ENCODE measurements at regions of chr2 and their contacts with region 1.

Region 1: DNA sequence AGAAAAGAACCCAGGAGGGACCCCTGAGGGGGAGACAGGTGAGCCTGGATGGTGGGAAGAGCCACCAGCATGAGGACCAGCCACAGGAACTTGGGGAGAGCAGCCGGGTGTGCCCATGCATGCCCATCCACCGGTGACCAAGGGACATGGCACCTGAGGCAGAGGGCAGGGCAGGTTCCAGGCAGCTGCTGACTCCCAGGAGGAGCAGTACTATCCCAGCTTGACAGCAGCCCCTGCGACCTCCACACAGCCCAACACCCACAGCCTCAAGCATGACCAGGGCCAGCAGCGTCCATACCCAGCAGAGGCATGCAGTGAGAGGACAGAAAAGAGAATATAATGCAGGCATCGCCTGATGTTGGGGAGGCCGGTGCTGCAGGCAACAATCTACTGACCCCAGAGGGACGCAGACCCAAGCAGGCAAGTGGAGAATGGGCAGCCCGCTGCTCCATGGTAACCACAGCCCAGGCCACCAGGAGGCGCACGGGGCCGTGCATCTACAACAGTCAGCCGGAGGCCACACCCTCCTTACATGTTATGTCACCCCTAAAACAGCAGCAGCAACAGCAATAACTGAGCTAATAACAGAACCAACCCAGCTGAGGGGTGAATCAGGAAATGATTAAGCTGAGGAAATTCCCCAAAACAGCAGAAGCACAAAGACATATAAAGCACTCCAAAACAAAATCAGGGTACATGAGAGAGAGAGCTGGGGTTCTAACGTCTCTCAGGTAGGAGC is 44.1 kb downstream of the ANKMY1 start:
- DNase-seq: peak; percentile 80 to 91
- ATAC-seq: peak; percentile 95 to 99 (median 99)
- H3K4me3 ChIP-seq: no peak overlapping the region
- H3K4me3 Mint-ChIP-seq: no peak overlapping the region
- H3K27ac ChIP-seq: peak overlapping the region; percentile 9
- H3K27ac Mint-ChIP-seq: peak overlapping the region; percentile 7 to 78
- H3K4me1 ChIP-seq: peaks cover 10% of the 10 kb centered on the region
- H3K4me1 Mint-ChIP-seq: peaks cover 6 to 20% of the 10 kb centered on the region in 2 donors
- H3K27me3 ChIP-seq: no peaks in the 10 kb centered on the region
- H3K27me3 Mint-ChIP-seq: no peaks in the 10 kb centered on the region
- CTCF ChIP-seq: peak; percentile 86

Region 2: DNA sequence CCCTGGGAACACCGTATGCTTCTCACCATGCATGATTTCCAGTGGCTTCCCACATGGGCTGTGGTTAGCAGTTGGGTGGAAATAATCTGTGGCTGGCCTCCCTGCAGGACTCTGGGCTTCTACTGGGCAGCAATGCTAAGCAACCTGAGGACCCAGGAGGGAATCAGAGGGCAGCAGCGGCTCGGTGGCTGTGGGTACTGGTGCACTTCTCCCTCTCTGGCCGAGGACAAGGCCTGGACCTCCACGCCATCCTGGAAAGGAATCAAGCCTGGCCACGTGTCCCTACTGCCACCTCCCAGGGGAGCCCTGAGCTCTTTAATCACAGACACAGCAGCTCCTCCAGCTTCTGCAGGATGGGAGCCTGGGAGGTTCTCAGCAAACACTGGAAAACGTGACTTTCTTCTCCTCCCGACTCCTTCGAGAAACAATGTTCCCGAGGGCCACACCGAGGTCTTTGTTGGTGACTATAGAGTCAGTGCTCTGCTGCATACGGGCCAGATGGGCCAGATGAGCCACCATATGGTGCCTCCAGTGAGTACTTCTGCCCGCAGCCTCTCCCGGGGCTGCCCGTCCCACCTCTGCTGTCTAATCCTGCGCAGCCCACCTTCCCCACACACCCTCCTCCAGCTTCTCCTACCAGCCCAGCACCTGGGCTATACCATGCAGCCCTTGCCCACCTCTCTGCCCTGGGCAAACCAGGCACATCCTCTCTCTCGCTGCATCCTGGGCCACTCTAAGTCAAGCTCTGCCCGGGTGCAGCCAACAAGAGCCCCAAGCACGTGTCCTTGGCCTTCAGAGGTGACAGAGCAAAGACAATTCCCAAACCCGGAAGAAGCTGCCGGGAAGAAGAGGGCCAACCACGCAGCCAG is 330.5 kb before region 1 on chr2:
- intact Hi-C with region 1: no loop called
- DNase-seq: no peak
- ATAC-seq: no peak
- H3K4me3 ChIP-seq: no peak overlapping the region
- H3K4me3 Mint-ChIP-seq: no peak overlapping the region
- H3K27ac ChIP-seq: no peak overlapping the region
- H3K27ac Mint-ChIP-seq: no peak overlapping the region
- H3K4me1 ChIP-seq: no peaks in the 10 kb centered on the region
- H3K4me1 Mint-ChIP-seq: no peaks in the 10 kb centered on the region
- H3K27me3 ChIP-seq: no peaks in the 10 kb centered on the region
- H3K27me3 Mint-ChIP-seq: peaks cover 14 to 35% of the 10 kb centered on the region in 2 donors
- CTCF ChIP-seq: no peak

Region 3: GRCh38 chr2:240469239-240469636 is 44.5 kb before region 1 on chr2:
- intact Hi-C with region 1: no loop called
- DNase-seq: peak in 1 of 2 donors; percentile 11
- ATAC-seq: no peak
- H3K4me3 ChIP-seq: no peak overlapping the region
- H3K4me3 Mint-ChIP-seq: no peak overlapping the region
- H3K27ac ChIP-seq: no peak overlapping the region
- H3K27ac Mint-ChIP-seq: no peak overlapping the region
- H3K4me1 ChIP-seq: no peaks in the 10 kb centered on the region
- H3K4me1 Mint-ChIP-seq: peaks cover 0 to 4% of the 10 kb centered on the region in 2 donors
- H3K27me3 ChIP-seq: no peaks in the 10 kb centered on the region
- H3K27me3 Mint-ChIP-seq: no peaks in the 10 kb centered on the region
- CTCF ChIP-seq: no peak

Region 4: DNA sequence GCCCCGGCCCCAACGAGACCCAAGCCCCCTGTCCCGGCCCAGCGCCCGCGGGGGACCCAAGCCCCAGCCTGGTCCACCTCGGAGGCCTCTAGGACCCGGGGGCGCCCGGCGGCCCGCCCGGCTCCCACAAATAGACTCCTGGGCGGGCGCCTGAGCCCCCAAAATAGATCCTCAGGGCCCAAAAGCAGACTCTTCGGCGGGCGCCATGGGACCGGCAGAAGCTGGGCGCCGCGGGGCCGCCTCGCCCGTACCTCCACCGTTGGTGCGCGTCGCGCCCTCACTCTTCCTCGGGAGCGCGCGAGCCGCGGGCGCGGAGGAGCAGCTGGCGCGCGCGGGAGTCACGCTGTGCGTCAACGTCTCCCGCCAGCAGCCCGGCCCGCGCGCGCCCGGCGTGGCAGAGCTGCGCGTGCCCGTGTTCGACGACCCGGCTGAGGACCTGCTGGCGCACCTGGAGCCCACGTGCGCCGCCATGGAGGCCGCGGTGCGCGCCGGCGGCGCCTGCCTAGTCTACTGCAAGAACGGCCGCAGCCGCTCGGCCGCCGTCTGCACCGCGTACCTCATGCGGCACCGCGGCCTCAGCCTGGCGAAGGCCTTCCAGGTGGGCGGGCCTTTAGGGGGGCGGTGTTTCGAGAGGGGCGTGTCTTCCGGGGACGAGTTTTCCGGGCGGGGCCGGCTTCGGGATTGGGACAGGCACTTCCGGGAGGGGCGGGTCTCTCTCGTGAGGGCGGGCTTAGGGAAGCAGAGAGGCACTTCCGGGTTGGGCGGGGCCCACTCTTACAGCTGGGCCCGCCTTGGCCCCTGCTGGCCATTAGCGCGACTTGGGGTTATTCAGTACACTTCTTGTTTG is 47.0 kb after region 1 on chr2:
- intact Hi-C with region 1: loop called (anchors 10 kb)
- DNase-seq: peak; percentile 98 to 99
- ATAC-seq: peak; percentile 64 to 85 (median 67)
- H3K4me3 ChIP-seq: peak overlapping the region; percentile 62
- H3K4me3 Mint-ChIP-seq: peak overlapping the region; percentile 93
- H3K27ac ChIP-seq: peak overlapping the region; percentile 96
- H3K27ac Mint-ChIP-seq: peak overlapping the region; percentile 99
- H3K4me1 ChIP-seq: peaks cover 78% of the 10 kb centered on the region
- H3K4me1 Mint-ChIP-seq: peaks cover 60 to 76% of the 10 kb centered on the region in 2 donors
- H3K27me3 ChIP-seq: no peaks in the 10 kb centered on the region
- H3K27me3 Mint-ChIP-seq: no peaks in the 10 kb centered on the region
- CTCF ChIP-seq: peak; percentile 39

Region 5: DNA sequence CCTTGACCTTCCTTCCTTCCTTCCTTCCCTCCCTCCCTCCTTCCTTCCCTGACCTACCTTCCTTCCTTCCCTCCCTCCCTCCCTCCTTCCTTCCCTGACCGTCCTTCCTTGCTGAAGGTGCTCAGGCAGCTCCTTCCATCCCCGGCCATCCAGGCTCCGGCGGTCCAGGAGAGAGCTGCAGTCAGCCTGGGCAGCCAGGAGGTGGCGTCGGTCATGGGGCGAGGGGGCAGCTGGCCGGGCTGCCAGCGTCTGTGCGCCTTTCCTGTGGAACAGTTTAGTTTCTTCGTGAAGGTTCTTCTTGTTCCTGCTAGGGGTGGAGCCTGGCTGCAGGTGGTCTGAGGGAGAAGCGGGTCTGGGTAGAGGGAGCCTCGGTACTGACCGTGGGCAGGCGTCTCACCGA is 127.2 kb after region 1 on chr2:
- intact Hi-C with region 1: no loop called
- DNase-seq: peak in 1 of 2 donors; percentile 23
- ATAC-seq: peak in 2 of 3 donors; percentile 68 to 72
- H3K4me3 ChIP-seq: no peak overlapping the region
- H3K4me3 Mint-ChIP-seq: no peak overlapping the region
- H3K27ac ChIP-seq: no peak overlapping the region
- H3K27ac Mint-ChIP-seq: peak overlapping the region in 1 of 2 donors; percentile 20
- H3K4me1 ChIP-seq: peaks cover 2% of the 10 kb centered on the region
- H3K4me1 Mint-ChIP-seq: peaks cover 0 to 11% of the 10 kb centered on the region in 2 donors
- H3K27me3 ChIP-seq: no peaks in the 10 kb centered on the region
- H3K27me3 Mint-ChIP-seq: peaks cover 0 to 3% of the 10 kb centered on the region in 2 donors
- CTCF ChIP-seq: no peak

Region 6: DNA sequence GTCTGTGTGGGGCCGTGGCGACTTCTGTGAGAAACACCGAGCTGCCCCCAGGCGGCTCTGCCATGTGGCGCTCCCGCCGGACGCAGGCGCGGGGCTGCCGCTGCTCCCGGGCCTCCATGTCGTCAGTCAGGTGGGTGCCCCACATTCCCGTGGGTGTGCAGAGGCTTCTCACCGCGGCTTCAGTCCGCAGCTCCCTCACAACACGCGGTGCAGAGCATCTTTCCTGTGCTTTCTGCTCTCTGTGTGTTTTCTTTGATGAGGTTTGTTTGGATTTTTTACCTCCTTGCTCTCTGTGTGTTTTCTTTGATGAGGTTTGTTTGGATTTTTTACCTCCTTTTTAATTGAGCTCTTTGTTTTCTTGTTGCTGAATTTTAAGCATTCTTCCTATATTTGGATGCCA is 190.9 kb after region 1 on chr2:
- intact Hi-C with region 1: loop called (anchors 10 kb)
- DNase-seq: peak in 1 of 2 donors; percentile 64
- ATAC-seq: no peak
- H3K4me3 ChIP-seq: no peak overlapping the region
- H3K4me3 Mint-ChIP-seq: no peak overlapping the region
- H3K27ac ChIP-seq: no peak overlapping the region
- H3K27ac Mint-ChIP-seq: no peak overlapping the region
- H3K4me1 ChIP-seq: no peaks in the 10 kb centered on the region
- H3K4me1 Mint-ChIP-seq: peaks cover 8 to 11% of the 10 kb centered on the region in 2 donors
- H3K27me3 ChIP-seq: peaks cover 2% of the 10 kb centered on the region
- H3K27me3 Mint-ChIP-seq: peaks cover 11% of the 10 kb centered on the region in 2 donors
- CTCF ChIP-seq: no peak

Region 7: GRCh38 chr2:240733803-240734495 is 220.2 kb after region 1 on chr2:
- intact Hi-C with region 1: loop called (anchors 1 kb)
- DNase-seq: peak in 1 of 2 donors; percentile 45
- ATAC-seq: peak; percentile 42 to 60 (median 42)
- H3K4me3 ChIP-seq: no peak overlapping the region
- H3K4me3 Mint-ChIP-seq: no peak overlapping the region
- H3K27ac ChIP-seq: no peak overlapping the region
- H3K27ac Mint-ChIP-seq: no peak overlapping the region
- H3K4me1 ChIP-seq: no peaks in the 10 kb centered on the region
- H3K4me1 Mint-ChIP-seq: no peaks in the 10 kb centered on the region
- H3K27me3 ChIP-seq: no peaks in the 10 kb centered on the region
- H3K27me3 Mint-ChIP-seq: no peaks in the 10 kb centered on the region
- CTCF ChIP-seq: no peak

Region 8: GRCh38 chr2:240840435-240841080 is 326.8 kb after region 1 on chr2:
- intact Hi-C with region 1: loop called (anchors 2 kb)
- DNase-seq: peak in 1 of 2 donors; percentile 50
- ATAC-seq: peak in 1 of 3 donors; percentile 6
- H3K4me3 ChIP-seq: no peak overlapping the region
- H3K4me3 Mint-ChIP-seq: no peak overlapping the region
- H3K27ac ChIP-seq: no peak overlapping the region
- H3K27ac Mint-ChIP-seq: no peak overlapping the region
- H3K4me1 ChIP-seq: no peaks in the 10 kb centered on the region
- H3K4me1 Mint-ChIP-seq: no peaks in the 10 kb centered on the region
- H3K27me3 ChIP-seq: no peaks in the 10 kb centered on the region
- H3K27me3 Mint-ChIP-seq: peaks cover 0 to 11% of the 10 kb centered on the region in 2 donors
- CTCF ChIP-seq: no peak